T-cell (primary cell): ENCODE measurements at regions of chr12 and their contacts with region 1.

Region 1: GRCh38 chr12:23600919-23601318 is 348.6 kb downstream of the SOX5 start:
- DNase-seq: no peak
- ATAC-seq: no peak
- H3K4me3 ChIP-seq: no peak overlapping the region
- H3K4me3 Mint-ChIP-seq: no peak overlapping the region
- H3K27ac ChIP-seq: no peak overlapping the region
- H3K27ac Mint-ChIP-seq: no peak overlapping the region
- H3K4me1 ChIP-seq: no peaks in the 10 kb centered on the region
- H3K4me1 Mint-ChIP-seq: no peaks in the 10 kb centered on the region
- H3K27me3 ChIP-seq: no peaks in the 10 kb centered on the region
- H3K27me3 Mint-ChIP-seq: no peaks in the 10 kb centered on the region

Region 2: DNA sequence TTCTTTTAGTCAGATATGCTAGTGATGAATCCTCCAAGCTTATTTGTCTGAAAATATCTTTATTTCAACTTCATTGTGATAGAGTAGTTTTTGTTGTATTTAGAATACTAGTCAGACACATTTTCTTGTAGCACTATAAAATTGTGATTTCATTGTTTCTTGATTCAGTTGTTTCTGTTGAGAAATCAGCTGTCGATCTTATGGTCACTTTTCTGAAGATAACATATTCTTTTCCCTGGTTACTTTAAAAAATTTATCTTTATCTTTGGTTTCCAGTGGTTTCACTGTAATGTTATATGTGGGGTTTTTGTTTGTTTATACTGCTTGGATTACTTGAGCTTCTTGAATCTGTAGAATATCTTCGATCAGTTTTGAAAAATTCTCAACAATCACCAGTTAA is 77.6 kb before region 1 on chr12:
- CTCF ChIA-PET with region 1: no interaction called
- POLR2A ChIA-PET with region 1: no interaction called
- DNase-seq: no peak
- ATAC-seq: no peak
- H3K4me3 ChIP-seq: no peak overlapping the region
- H3K4me3 Mint-ChIP-seq: no peak overlapping the region
- H3K27ac ChIP-seq: no peak overlapping the region
- H3K27ac Mint-ChIP-seq: no peak overlapping the region
- H3K4me1 ChIP-seq: no peaks in the 10 kb centered on the region
- H3K4me1 Mint-ChIP-seq: no peaks in the 10 kb centered on the region
- H3K27me3 ChIP-seq: no peaks in the 10 kb centered on the region
- H3K27me3 Mint-ChIP-seq: no peaks in the 10 kb centered on the region

Region 3: DNA sequence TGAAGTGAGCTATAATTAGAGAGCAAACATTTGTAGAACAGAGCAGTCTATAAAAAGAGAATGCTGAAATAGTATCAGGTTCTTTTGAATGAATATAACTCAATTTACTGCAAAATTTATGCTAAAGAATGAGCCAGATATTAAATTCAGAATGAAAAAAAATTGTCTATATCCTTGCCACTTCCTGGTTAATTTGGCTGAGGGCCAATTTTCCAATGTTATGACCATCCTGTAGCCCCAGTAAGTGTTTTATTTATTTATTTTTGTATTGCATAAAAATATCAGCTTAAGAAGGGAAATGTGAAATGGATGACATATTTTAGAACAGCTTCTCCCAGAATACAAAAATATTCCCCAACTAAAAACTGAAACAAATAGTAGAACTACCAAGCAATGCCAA is 85.2 kb after region 1 on chr12:
- CTCF ChIA-PET with region 1: no interaction called
- POLR2A ChIA-PET with region 1: interaction called in 1 of 2 experiments, 13 read pairs
- DNase-seq: no peak
- ATAC-seq: no peak
- H3K4me3 ChIP-seq: no peak overlapping the region
- H3K4me3 Mint-ChIP-seq: no peak overlapping the region
- H3K27ac ChIP-seq: no peak overlapping the region
- H3K27ac Mint-ChIP-seq: no peak overlapping the region
- H3K4me1 ChIP-seq: no peaks in the 10 kb centered on the region
- H3K4me1 Mint-ChIP-seq: no peaks in the 10 kb centered on the region
- H3K27me3 ChIP-seq: no peaks in the 10 kb centered on the region
- H3K27me3 Mint-ChIP-seq: no peaks in the 10 kb centered on the region